Activated CD4-positive, alpha-beta T cell treated with anti-CD3 and anti-CD28 coated beads for 36 hours (primary cell): ENCODE measurements at regions of chr13 and their contacts with region 1.

Region 1: DNA sequence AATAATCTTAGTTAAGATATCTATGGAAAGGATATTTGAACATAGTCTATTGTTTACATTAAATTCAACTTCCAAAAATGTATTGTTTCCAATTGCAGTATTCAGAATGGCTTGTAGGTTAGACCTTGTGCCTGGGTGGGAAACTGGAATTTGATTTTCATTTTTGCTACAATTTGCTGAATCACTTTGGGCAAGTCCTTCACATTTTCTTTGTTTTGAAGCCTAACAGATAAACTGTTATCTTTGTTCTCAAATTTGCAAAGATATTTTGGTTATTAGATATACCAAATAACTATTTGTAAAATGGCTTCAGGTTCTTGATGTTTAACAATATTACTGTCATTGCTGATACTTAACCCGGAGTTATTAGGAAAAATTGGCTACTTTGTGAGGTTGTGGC is 82.6 kb downstream of the WDFY2 start:
- DNase-seq: no peak
- ATAC-seq: no peak
- H3K4me3 Mint-ChIP-seq: no peak overlapping the region
- H3K27ac Mint-ChIP-seq: no peak overlapping the region
- H3K4me1 Mint-ChIP-seq: peaks cover 28% of the 10 kb centered on the region
- H3K27me3 Mint-ChIP-seq: no peaks in the 10 kb centered on the region

Region 2: GRCh38 chr13:51704399-51705313 is 37.8 kb after region 1 on chr13:
- CTCF ChIA-PET with region 1: no interaction called
- POLR2A ChIA-PET with region 1: no interaction called
- intact Hi-C with region 1: loop called in 1 of 2 experiments (anchors 1 kb)
- DNase-seq: no peak
- ATAC-seq: no peak
- H3K4me3 Mint-ChIP-seq: no peak overlapping the region
- H3K27ac Mint-ChIP-seq: no peak overlapping the region
- H3K4me1 Mint-ChIP-seq: peaks cover 5% of the 10 kb centered on the region
- H3K27me3 Mint-ChIP-seq: no peaks in the 10 kb centered on the region